ENCODE measurements at regions of chr19 and their contacts with region 1.

Region 1: DNA sequence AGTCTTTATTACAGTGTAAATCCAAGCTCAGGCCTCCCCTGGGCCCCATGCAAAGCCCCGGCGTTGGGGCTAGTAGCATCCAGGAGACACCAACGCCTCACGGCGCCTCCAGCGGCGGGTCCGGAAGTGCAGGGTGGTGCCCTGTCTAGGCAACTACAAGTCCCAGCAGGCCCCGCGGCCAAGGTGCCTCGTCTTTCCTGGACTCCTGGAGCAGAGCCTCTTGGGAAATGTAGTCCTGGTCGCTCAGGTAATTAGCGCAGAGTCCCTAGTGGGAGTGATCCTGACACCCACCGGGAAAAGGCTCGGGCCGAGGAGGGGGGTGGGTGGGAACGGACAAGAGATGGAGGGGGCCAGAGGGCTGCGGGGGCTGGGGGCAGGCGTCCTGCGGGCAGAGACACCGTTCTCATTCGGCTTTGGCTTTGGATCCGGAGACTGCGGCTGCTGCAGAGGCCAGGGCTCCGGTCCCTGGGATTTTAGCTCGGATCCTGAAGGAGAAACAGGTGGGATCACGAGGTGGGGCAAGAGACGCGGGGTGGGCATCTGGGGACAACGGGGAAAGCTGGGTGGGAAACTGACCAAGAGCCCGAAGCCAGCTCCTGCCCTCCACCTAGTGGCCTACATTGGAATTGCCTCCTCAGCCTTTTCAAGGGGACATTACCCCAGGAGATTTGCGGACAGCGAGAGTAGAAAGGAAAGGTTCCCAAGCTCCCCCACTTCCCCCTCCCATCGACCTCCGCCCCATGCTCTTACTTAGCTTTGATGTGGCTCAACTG is 11.4 kb downstream of the RTN2 start:
- H3K4me3 ChIP-seq: peak overlapping the region; percentile 53
- H3K27ac ChIP-seq: peak overlapping the region; percentile 53; the same call in 1 of the 2 replicates
- H3K4me1 ChIP-seq: peaks cover 2% of the 10 kb centered on the region; the same call in 1 of the 2 replicates
- CTCF ChIP-seq: peak; percentile 89

Region 2: GRCh38 chr19:45413497-45413896 is 72.0 kb before region 1 on chr19:
- CTCF ChIA-PET with region 1: interaction called, 12 read pairs
- POLR2A ChIA-PET with region 1: no interaction called
- H3K4me3 ChIP-seq: no peak overlapping the region
- H3K27ac ChIP-seq: no peak overlapping the region
- H3K4me1 ChIP-seq: no peaks in the 10 kb centered on the region
- CTCF ChIP-seq: no peak

Region 3: GRCh38 chr19:45439569-45440254 is 45.8 kb before region 1 on chr19:
- CTCF ChIA-PET with region 1: interaction called, 295 read pairs
- POLR2A ChIA-PET with region 1: interaction called, 7 read pairs
- H3K4me3 ChIP-seq: peak overlapping the region; percentile 54
- H3K27ac ChIP-seq: peak overlapping the region; percentile 40; the same call in 1 of the 2 replicates
- H3K4me1 ChIP-seq: 0 out of 2 replicates have a peak, but pooled peaks cover 4% of the 10 kb centered on the region
- CTCF ChIP-seq: peak; percentile 67

Region 4: GRCh38 chr19:45455707-45456499 is 29.6 kb before region 1 on chr19:
- CTCF ChIA-PET with region 1: interaction called, 16 read pairs
- POLR2A ChIA-PET with region 1: interaction called, 4 read pairs
- H3K4me3 ChIP-seq: peak overlapping the region; percentile 23
- H3K27ac ChIP-seq: 0 out of 2 replicates have a peak overlapping the region, but pooled peaks have one; percentile 11
- H3K4me1 ChIP-seq: peaks cover 7% of the 10 kb centered on the region; the same call in 1 of the 2 replicates
- CTCF ChIP-seq: no peak

Region 5: DNA sequence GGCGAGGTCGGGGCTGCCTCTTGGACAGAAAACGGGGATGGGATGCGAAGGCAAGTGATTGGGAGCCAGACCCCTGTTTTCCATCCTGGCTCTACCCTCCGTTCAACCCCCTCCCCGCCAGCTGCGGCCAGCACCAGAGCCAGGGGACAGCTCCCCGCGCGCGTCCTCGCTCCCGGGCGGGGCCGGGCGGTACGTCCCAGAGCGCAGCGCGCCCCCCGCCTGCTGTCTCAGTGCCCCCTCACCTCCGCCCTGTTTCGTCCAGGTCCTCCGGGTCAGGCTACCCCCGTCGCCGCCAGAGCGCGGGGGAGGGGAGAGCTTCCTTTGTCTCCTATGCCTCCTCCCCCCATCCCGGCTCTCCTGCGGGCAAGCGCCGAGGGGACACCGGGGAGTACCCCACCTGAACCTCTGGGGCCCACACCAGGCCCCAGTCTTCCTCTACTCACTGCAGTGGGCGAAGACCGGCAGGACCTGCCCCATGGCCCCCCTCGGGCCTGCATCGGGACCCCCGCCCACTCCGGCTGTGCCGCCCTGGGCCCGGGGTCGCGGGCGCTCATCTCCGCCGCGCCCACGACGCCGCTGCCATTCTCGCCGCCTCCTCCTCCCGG is 11.0 kb after region 1 on chr19:
- CTCF ChIA-PET with region 1: interaction called, 39 read pairs
- POLR2A ChIA-PET with region 1: interaction called, 4 read pairs
- H3K4me3 ChIP-seq: peak overlapping the region; percentile 53
- H3K27ac ChIP-seq: no peak overlapping the region
- H3K4me1 ChIP-seq: peaks cover 6% of the 10 kb centered on the region
- CTCF ChIP-seq: no peak

Region 6: DNA sequence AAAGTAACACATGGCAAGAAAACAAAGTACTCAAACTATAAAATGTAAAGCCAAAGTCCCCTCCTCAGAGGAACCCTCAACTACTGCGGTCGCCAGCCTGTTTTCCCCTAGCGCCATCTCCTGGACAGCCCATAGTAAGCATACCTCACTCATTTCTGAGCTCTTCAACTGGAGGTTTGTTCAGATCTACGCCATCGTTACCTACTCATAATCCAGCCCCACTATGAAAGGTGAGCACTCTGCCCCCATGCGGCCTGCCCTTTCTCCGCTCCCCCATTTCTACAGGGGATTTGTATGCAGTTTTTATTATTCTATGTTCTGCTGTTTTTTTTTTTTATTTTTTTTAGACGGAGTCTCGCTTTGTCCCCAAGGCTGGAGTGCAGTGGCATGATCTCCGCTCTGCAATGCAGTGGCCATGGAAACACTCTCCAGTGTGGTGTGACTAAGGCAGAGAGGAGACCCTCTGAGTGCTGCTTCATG is 72.9 kb after region 1 on chr19:
- CTCF ChIA-PET with region 1: interaction called, 20 read pairs
- POLR2A ChIA-PET with region 1: no interaction called
- H3K4me3 ChIP-seq: no peak overlapping the region
- H3K27ac ChIP-seq: no peak overlapping the region
- H3K4me1 ChIP-seq: no peaks in the 10 kb centered on the region
- CTCF ChIP-seq: peak; percentile 92